T-cell (primary cell): ENCODE measurements at regions of chr13 and their contacts with region 1.

Region 1: DNA sequence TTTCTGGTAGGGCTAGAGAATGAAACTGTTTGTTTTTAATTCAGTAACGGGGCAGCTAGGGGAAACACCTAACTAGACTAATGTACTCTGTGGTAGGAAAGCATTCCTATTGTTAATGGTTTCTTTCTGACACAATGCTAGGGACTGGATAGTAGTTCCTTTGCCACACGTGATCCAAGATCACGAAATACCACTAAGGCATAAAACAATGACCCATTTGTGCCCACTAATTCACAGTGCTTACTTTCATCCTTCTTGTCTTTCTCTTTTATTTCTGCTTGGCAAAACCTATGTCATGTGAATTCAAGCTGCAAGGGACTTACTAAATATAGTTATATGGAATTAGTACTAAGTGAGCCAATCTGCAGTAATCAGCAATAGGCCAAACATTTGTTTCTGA is 834.1 kb upstream of the SLITRK6 start:
- DNase-seq: no peak
- ATAC-seq: no peak
- H3K4me3 ChIP-seq: no peak overlapping the region
- H3K4me3 Mint-ChIP-seq: no peak overlapping the region
- H3K27ac ChIP-seq: no peak overlapping the region
- H3K27ac Mint-ChIP-seq: no peak overlapping the region
- H3K4me1 ChIP-seq: no peaks in the 10 kb centered on the region
- H3K4me1 Mint-ChIP-seq: no peaks in the 10 kb centered on the region
- H3K27me3 ChIP-seq: no peaks in the 10 kb centered on the region
- H3K27me3 Mint-ChIP-seq: no peaks in the 10 kb centered on the region

Region 2: DNA sequence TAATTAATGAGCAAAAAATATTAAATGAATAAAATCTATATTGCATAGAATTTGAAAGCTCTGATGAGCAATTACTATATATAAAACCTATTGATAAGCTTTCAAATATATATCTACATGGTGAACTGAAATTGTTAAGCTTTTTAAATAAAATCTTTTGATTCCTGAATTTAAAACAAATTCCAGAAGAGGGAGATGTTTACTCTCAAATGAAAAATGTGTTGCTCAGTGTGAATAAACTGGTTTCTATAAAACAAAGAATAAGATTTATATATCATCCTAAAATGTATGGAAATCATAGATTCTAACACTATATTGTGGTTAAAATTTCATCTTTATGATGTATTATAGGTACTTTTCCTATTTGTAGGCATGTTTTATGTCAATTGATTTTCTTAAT is 662.6 kb before region 1 on chr13:
- CTCF ChIA-PET with region 1: no interaction called
- POLR2A ChIA-PET with region 1: interaction called in 1 of 2 experiments, 10 read pairs
- DNase-seq: no peak
- ATAC-seq: no peak
- H3K4me3 ChIP-seq: no peak overlapping the region
- H3K4me3 Mint-ChIP-seq: no peak overlapping the region
- H3K27ac ChIP-seq: no peak overlapping the region
- H3K27ac Mint-ChIP-seq: no peak overlapping the region
- H3K4me1 ChIP-seq: no peaks in the 10 kb centered on the region
- H3K4me1 Mint-ChIP-seq: no peaks in the 10 kb centered on the region
- H3K27me3 ChIP-seq: no peaks in the 10 kb centered on the region
- H3K27me3 Mint-ChIP-seq: no peaks in the 10 kb centered on the region

Region 3: GRCh38 chr13:86741762-86742285 is 108.5 kb after region 1 on chr13:
- CTCF ChIA-PET with region 1: no interaction called
- POLR2A ChIA-PET with region 1: no interaction called
- DNase-seq: no peak
- ATAC-seq: no peak
- H3K4me3 ChIP-seq: no peak overlapping the region
- H3K4me3 Mint-ChIP-seq: no peak overlapping the region
- H3K27ac ChIP-seq: no peak overlapping the region
- H3K27ac Mint-ChIP-seq: no peak overlapping the region
- H3K4me1 ChIP-seq: no peaks in the 10 kb centered on the region
- H3K4me1 Mint-ChIP-seq: no peaks in the 10 kb centered on the region
- H3K27me3 ChIP-seq: no peaks in the 10 kb centered on the region
- H3K27me3 Mint-ChIP-seq: no peaks in the 10 kb centered on the region